ENCODE measurements at regions of chr3 and their contacts with region 1.

Region 1: DNA sequence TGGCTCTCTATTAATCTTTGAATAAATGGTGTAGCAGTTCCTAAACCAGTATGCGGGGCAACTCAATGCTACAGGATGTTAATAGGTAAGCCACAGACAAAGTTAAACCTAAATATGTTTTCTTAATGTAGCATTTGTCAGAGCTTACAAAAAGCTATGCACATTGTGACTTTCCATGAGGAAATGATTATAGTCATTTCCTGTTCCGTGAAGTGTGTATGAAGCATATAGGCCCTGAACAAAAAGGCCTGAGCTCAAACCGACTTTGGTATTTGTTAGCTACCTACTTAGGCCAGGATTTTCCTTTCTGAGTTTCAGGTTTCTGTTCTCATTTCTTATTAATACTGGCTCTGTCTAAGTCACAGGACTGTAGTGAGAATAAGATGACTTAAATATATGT is 14.2 kb downstream of the ZNF80 start:
- DNase-seq: no peak
- H3K4me3 Mint-ChIP-seq: no peak overlapping the region
- H3K27ac Mint-ChIP-seq: peak overlapping the region; percentile 92
- H3K4me1 Mint-ChIP-seq: peaks cover 90% of the 10 kb centered on the region
- H3K27me3 Mint-ChIP-seq: no peaks in the 10 kb centered on the region

Region 2: DNA sequence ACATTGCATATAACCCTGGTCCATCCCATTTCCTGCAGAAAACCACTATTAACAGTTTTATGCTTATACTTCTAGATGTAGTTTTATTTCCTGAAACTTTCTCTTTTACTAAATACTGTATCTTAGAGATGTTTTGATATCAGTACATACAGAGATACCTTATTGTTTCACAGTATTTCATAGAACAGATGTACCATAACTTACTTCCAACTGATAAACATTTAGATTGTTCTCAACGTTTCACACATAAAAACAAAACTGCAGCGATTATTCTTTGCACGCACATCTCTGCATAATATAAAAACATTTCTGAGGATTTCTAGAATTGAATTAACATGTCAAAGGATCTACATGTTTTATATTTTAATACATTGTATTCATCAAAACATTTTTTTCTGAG is 11.6 kb after region 1 on chr3:
- CTCF ChIA-PET with region 1: interaction called, 5 read pairs
- POLR2A ChIA-PET with region 1: interaction called, 9 read pairs
- intact Hi-C with region 1: loop called (anchors 1 kb)
- DNase-seq: no peak
- H3K4me3 Mint-ChIP-seq: no peak overlapping the region
- H3K27ac Mint-ChIP-seq: peak overlapping the region; percentile 76
- H3K4me1 Mint-ChIP-seq: peaks cover 66% of the 10 kb centered on the region
- H3K27me3 Mint-ChIP-seq: no peaks in the 10 kb centered on the region

Region 3: GRCh38 chr3:114242947-114243346 is 19.8 kb after region 1 on chr3:
- CTCF ChIA-PET with region 1: interaction called, 5 read pairs
- POLR2A ChIA-PET with region 1: no interaction called
- intact Hi-C with region 1: loop called (anchors 1 kb)
- DNase-seq: peak; percentile 49
- H3K4me3 Mint-ChIP-seq: no peak overlapping the region
- H3K27ac Mint-ChIP-seq: no peak overlapping the region
- H3K4me1 Mint-ChIP-seq: peaks cover 22% of the 10 kb centered on the region
- H3K27me3 Mint-ChIP-seq: no peaks in the 10 kb centered on the region

Region 4: DNA sequence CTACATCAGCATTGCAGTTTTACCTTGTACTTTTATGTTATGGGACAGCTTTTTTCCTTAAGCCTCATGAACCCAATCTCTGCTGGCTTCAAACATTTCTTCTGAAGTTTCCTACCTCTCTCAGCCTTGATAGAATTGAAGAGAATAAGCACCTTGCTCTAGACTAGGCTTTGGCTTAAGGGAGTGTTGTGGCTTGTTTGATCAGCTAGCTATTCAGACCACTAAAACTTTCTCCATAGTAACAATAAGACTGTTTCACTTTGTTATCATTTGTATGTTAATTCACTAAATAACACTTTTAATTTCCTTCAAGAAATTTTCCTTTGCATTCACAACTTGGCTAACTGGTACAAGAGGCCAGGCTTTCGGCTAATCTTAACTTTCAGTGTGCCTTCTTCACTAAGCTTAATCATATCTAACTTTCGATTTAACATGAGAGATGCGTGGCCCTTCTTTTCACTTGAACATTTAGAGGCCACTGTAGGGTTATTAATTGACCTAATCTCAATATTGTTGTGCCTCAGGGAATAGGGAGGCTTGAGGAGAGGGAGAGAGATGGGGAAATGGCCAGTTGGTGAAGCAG is 62.6 kb after region 1 on chr3:
- CTCF ChIA-PET with region 1: interaction called, 38 read pairs
- POLR2A ChIA-PET with region 1: interaction called, 16 read pairs
- intact Hi-C with region 1: loop called (anchors 1 kb)
- DNase-seq: no peak
- H3K4me3 Mint-ChIP-seq: peak overlapping the region; percentile 57
- H3K27ac Mint-ChIP-seq: peak overlapping the region; percentile 91
- H3K4me1 Mint-ChIP-seq: peaks cover 33% of the 10 kb centered on the region
- H3K27me3 Mint-ChIP-seq: no peaks in the 10 kb centered on the region